CD4-positive, alpha-beta T cell (primary cell): ENCODE measurements at regions of chr1 and their contacts with region 1.

Region 1: GRCh38 chr1:17236779-17237560 is 11.9 kb upstream of the PADI3 start:
- DNase-seq: peak; percentile 74 to 92 (median 87)
- ATAC-seq: peak; percentile 69
- H3K4me3 ChIP-seq: no peak overlapping the region
- H3K4me3 Mint-ChIP-seq: no peak overlapping the region
- H3K27ac ChIP-seq: no peak overlapping the region
- H3K27ac Mint-ChIP-seq: no peak overlapping the region
- H3K4me1 ChIP-seq: peaks cover 4% of the 10 kb centered on the region
- H3K4me1 Mint-ChIP-seq: peaks cover 5% of the 10 kb centered on the region
- H3K27me3 ChIP-seq: no peaks in the 10 kb centered on the region
- H3K27me3 Mint-ChIP-seq: no peaks in the 10 kb centered on the region
- CTCF ChIP-seq: peak; percentile 84

Region 2: DNA sequence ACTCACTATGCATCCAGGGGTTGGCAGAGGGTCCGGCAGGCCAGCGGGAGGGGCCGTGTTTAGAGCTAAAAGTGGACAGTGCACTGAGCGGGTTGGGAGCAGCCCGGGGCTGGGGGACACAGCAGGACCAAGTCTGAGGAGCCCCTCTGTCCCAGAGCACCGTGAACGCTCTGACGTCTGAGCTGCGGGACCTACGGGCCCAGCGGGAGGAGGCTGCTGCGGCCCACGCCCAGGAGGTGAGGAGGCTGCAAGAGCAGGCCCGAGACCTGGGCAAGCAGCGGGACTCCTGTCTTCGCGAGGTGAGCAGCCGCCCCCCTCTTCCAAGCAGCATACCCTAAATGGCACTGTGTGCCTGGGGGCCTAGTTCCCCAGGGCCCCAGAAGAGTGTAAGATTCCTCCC is 282.4 kb before region 1 on chr1:
- CTCF ChIA-PET with region 1: no interaction called
- POLR2A ChIA-PET with region 1: no interaction called
- intact Hi-C with region 1: loop called in 1 of 2 experiments (anchors 5 kb)
- DNase-seq: no peak
- ATAC-seq: no peak
- H3K4me3 ChIP-seq: no peak overlapping the region
- H3K4me3 Mint-ChIP-seq: no peak overlapping the region
- H3K27ac ChIP-seq: no peak overlapping the region
- H3K27ac Mint-ChIP-seq: no peak overlapping the region
- H3K4me1 ChIP-seq: peaks cover 7% of the 10 kb centered on the region
- H3K4me1 Mint-ChIP-seq: peaks cover 4% of the 10 kb centered on the region
- H3K27me3 ChIP-seq: no peaks in the 10 kb centered on the region
- H3K27me3 Mint-ChIP-seq: no peaks in the 10 kb centered on the region
- CTCF ChIP-seq: no peak

Region 3: GRCh38 chr1:17059739-17060460 is 177.1 kb before region 1 on chr1:
- CTCF ChIA-PET with region 1: no interaction called
- POLR2A ChIA-PET with region 1: no interaction called
- intact Hi-C with region 1: loop called in 1 of 2 experiments (anchors 5 kb)
- DNase-seq: peak in 7 of 14 experiments; percentile 6 to 72 (median 25)
- ATAC-seq: peak; percentile 68
- H3K4me3 ChIP-seq: no peak overlapping the region
- H3K4me3 Mint-ChIP-seq: no peak overlapping the region
- H3K27ac ChIP-seq: no peak overlapping the region
- H3K27ac Mint-ChIP-seq: no peak overlapping the region
- H3K4me1 ChIP-seq: no peaks in the 10 kb centered on the region
- H3K4me1 Mint-ChIP-seq: no peaks in the 10 kb centered on the region
- H3K27me3 ChIP-seq: no peaks in the 10 kb centered on the region
- H3K27me3 Mint-ChIP-seq: peaks cover 10% of the 10 kb centered on the region
- CTCF ChIP-seq: no peak

Region 4: DNA sequence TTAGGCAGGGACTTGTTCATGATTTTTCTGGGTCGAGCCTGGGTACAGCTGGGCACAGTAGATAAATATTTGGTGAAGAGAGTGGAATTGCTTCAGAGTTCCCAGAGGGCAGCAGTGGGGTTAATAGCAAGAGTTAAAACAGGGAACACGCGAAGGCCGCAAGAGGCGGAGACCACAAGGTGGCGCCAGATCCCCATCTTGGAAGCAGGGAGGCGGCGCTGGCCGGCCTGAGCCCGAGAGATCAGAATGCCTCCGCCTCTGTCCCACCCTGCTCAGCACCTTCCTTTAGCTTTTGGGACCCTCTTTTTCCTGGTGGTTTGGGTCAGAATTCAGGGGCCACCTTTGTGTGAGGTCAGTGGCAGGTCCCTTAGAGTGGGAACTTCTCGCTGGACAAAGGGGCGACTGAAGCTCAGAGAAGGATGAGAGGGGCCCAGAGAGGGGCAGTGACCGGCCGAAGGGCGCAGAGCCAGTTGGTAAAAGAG is 111.2 kb before region 1 on chr1:
- CTCF ChIA-PET with region 1: interaction called, 37 read pairs
- POLR2A ChIA-PET with region 1: no interaction called
- intact Hi-C with region 1: loop called (anchors 1 kb)
- DNase-seq: peak; percentile 66 to 91 (median 80)
- ATAC-seq: peak; percentile 76
- H3K4me3 ChIP-seq: no peak overlapping the region
- H3K4me3 Mint-ChIP-seq: no peak overlapping the region
- H3K27ac ChIP-seq: no peak overlapping the region
- H3K27ac Mint-ChIP-seq: no peak overlapping the region
- H3K4me1 ChIP-seq: peaks cover 4% of the 10 kb centered on the region
- H3K4me1 Mint-ChIP-seq: peaks cover 5% of the 10 kb centered on the region
- H3K27me3 ChIP-seq: no peaks in the 10 kb centered on the region
- H3K27me3 Mint-ChIP-seq: peaks cover 21% of the 10 kb centered on the region
- CTCF ChIP-seq: peak; percentile 97

Region 5: DNA sequence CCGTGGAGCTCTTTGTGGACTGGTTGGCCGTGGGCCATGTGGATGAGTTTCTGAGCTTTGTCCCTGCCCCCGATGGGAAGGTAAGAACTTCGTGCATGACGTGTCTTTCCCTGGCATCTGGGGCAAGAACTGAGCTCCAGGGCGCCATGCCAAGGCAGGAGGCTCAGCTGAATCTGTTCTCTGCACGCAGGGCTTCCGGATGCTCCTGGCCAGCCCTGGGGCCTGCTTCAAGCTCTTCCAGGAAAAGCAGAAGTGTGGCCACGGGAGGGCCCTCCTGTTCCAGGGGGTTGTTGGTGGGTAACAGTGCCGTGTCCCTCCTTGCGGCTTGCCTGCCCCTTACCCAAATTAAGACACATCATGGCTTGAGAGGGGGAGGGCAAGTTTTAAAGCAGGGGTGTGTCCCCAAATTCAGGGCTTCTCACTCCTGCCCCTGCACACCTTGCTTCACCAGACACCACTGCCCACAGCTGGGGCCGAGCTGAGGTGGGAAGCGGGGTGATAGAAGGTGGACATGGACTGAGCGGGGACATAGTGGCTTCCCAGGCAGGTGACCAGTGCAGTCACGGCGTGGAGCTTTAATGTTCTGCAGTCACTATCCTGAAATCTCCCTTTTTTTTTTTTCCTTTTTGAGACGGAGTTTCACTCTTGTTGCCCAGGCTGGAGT is 39.7 kb after region 1 on chr1:
- CTCF ChIA-PET with region 1: no interaction called
- POLR2A ChIA-PET with region 1: no interaction called
- intact Hi-C with region 1: no loop called
- DNase-seq: peak in 2 of 14 experiments; percentile 32 to 38
- ATAC-seq: no peak
- H3K4me3 ChIP-seq: no peak overlapping the region
- H3K4me3 Mint-ChIP-seq: no peak overlapping the region
- H3K27ac ChIP-seq: no peak overlapping the region
- H3K27ac Mint-ChIP-seq: no peak overlapping the region
- H3K4me1 ChIP-seq: no peaks in the 10 kb centered on the region
- H3K4me1 Mint-ChIP-seq: no peaks in the 10 kb centered on the region
- H3K27me3 ChIP-seq: no peaks in the 10 kb centered on the region
- H3K27me3 Mint-ChIP-seq: peaks cover 14% of the 10 kb centered on the region
- CTCF ChIP-seq: no peak